Lower leg skin (tissue), 4 donors: ENCODE measurements at regions of chr14 and their contacts with region 1.

Region 1: DNA sequence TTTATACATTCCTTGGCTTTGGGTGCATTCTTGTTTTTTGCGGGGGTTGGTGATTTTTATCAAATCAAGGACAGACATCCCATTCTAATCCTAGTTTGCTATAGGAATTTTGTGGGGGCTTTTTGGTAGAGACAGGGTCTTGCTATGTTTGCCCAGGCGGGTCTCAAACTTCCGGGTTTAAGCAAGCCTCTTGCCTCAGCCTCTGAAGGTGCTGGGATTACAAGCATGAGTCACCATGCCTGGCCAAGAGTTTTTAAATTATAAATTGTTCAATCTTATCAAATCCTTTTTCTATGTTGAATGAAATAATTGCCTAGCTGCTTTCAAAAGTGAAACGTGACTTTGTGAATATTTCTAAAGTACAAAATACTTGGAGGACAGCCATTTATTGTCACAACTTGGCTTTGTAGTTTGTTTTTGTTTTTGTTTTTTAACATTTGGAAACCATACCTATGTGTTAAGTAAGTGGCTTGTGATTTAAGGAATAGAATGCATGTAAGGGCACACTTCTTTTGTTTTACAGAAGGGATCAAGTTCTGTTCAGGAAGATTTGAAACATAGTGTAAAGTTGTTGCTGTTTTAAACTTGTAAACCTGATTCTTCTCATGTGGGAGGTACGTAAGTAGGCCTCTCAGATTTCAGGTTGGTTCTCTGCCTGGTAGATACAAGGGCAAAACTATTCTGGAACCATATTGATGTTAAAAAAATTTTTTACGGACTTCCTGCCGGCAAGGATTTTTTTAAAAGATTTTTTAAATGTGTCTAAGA is 13.4 kb downstream of the MARK3 start:
- DNase-seq: no peak
- H3K4me3 ChIP-seq: no peak overlapping the region
- CTCF ChIP-seq: no peak
- POLR2A ChIP-seq: no peak

Region 2: GRCh38 chr14:102616799-102617198 is 781.8 kb before region 1 on chr14:
- intact Hi-C with region 1: loop called (anchors 5 kb)
- DNase-seq: no peak
- H3K4me3 ChIP-seq: no peak overlapping the region
- CTCF ChIP-seq: no peak
- POLR2A ChIP-seq: no peak

Region 3: GRCh38 chr14:103408491-103409155 is 10.0 kb after region 1 on chr14:
- intact Hi-C with region 1: no loop called
- DNase-seq: no peak
- H3K4me3 ChIP-seq: no peak overlapping the region
- CTCF ChIP-seq: no peak
- POLR2A ChIP-seq: no peak

Region 4: GRCh38 chr14:104221636-104222369 is 823.2 kb after region 1 on chr14:
- intact Hi-C with region 1: no loop called
- DNase-seq: no peak
- H3K4me3 ChIP-seq: no peak overlapping the region
- CTCF ChIP-seq: no peak
- POLR2A ChIP-seq: no peak